GM12878 (cell line): ENCODE measurements at regions of chr1 and their contacts with region 1.

Region 1: GRCh38 chr1:181142096-181142958 is 53.8 kb downstream of the IER5 start:
- DNase-seq: no peak
- ATAC-seq: peak; percentile 92
- H3K4me3 ChIP-seq: no peak overlapping the region
- H3K27ac ChIP-seq: no peak overlapping the region
- H3K4me1 ChIP-seq: peaks cover 37% of the 10 kb centered on the region
- H3K27me3 ChIP-seq: no peaks in the 10 kb centered on the region
- CTCF ChIP-seq: peak; percentile 94 to 98 (median 98); a peak in 5 of 6 replicates
- EP300 ChIP-seq: no peak
- POLR2A ChIP-seq: no peak
- RAD21 ChIP-seq: peak; percentile 99

Region 2: GRCh38 chr1:180631766-180632325 is 510.5 kb before region 1 on chr1 and contains the start of gene XPR1:
- CTCF ChIA-PET with region 1: interaction called, 5 read pairs
- POLR2A ChIA-PET with region 1: no interaction called
- RAD21 ChIA-PET with region 1: interaction called, 4 read pairs
- SMC1A ChIA-PET with region 1: interaction called, 3 read pairs
- in situ Hi-C with region 1: no loop called
- intact Hi-C with region 1: loop called (anchors 10 kb)
- DNase-seq: peak; percentile 95
- ATAC-seq: peak; percentile 96
- H3K4me3 ChIP-seq: peak within 1 kb of the TSS; percentile 89
- H3K27ac ChIP-seq: peak within 1 kb of the TSS; percentile 56
- H3K4me1 ChIP-seq: peaks cover 8% of the 10 kb centered on the region
- H3K27me3 ChIP-seq: no peaks in the 10 kb centered on the region
- CTCF ChIP-seq: peak; percentile 9 to 16 (median 10); a peak in 1 of 6 replicates
- EP300 ChIP-seq: no peak
- POLR2A ChIP-seq: peak; percentile 88
- RAD21 ChIP-seq: peak; percentile 26; the same call in 1 of the 2 replicates
- polyA plus RNA-seq, gene XPR1: 1.1 to 1.5 TPM

Region 3: DNA sequence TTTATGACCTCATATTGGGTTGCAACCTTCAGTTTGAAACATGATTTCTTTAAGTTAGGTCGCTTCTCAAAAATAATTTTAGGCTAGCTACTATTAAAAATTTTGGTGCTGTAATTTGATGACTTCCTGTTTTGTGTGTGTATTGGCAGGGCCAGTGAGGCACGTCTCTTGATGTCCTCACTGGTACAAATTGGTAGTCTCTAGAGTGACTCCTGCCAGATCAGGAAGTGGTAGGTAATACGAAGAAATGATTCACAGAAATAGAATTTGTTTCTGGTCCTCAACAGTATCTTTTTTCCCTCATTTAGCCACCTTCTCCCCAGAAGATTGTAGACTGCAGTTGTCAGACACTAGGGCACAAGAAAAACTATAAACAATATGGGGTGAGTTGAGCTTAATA is 350.5 kb before region 1 on chr1:
- CTCF ChIA-PET with region 1: no interaction called
- POLR2A ChIA-PET with region 1: no interaction called
- RAD21 ChIA-PET with region 1: no interaction called
- SMC1A ChIA-PET with region 1: no interaction called
- in situ Hi-C with region 1: no loop called
- intact Hi-C with region 1: no loop called
- DNase-seq: no peak
- ATAC-seq: peak; percentile 70
- H3K4me3 ChIP-seq: no peak overlapping the region
- H3K27ac ChIP-seq: no peak overlapping the region
- H3K4me1 ChIP-seq: no peaks in the 10 kb centered on the region
- H3K27me3 ChIP-seq: no peaks in the 10 kb centered on the region
- CTCF ChIP-seq: no peak
- EP300 ChIP-seq: no peak
- POLR2A ChIP-seq: no peak
- RAD21 ChIP-seq: no peak

Region 4: GRCh38 chr1:180912801-180913565 is 229.3 kb before region 1 on chr1 and contains the start of gene KIAA1614:
- CTCF ChIA-PET with region 1: interaction called, 4 read pairs
- POLR2A ChIA-PET with region 1: interaction called, 3 read pairs
- RAD21 ChIA-PET with region 1: interaction called, 11 read pairs
- SMC1A ChIA-PET with region 1: interaction called, 15 read pairs
- in situ Hi-C with region 1: no loop called
- intact Hi-C with region 1: no loop called
- DNase-seq: no peak
- ATAC-seq: peak; percentile 45
- H3K4me3 ChIP-seq: peak within 1 kb of the TSS; percentile 61
- H3K27ac ChIP-seq: no peak within 1 kb of the TSS
- H3K4me1 ChIP-seq: peaks cover 22% of the 10 kb centered on the region
- H3K27me3 ChIP-seq: peaks cover 0 to 3% of the 10 kb centered on the region in 2 experiments; a peak in 1 of 4 replicates
- CTCF ChIP-seq: no peak
- EP300 ChIP-seq: no peak
- POLR2A ChIP-seq: no peak
- RAD21 ChIP-seq: no peak
- polyA plus RNA-seq, gene KIAA1614: 0.03 TPM in 1 of 2 experiments, not detected in the other

Region 5: GRCh38 chr1:181013144-181013543 is 129.2 kb before region 1 on chr1:
- CTCF ChIA-PET with region 1: interaction called, 13 read pairs
- POLR2A ChIA-PET with region 1: interaction called, 3 read pairs
- RAD21 ChIA-PET with region 1: interaction called, 12 read pairs
- SMC1A ChIA-PET with region 1: interaction called, 14 read pairs
- in situ Hi-C with region 1: no loop called
- intact Hi-C with region 1: no loop called
- DNase-seq: no peak
- ATAC-seq: no peak
- H3K4me3 ChIP-seq: no peak overlapping the region
- H3K27ac ChIP-seq: no peak overlapping the region
- H3K4me1 ChIP-seq: peaks cover 35% of the 10 kb centered on the region
- H3K27me3 ChIP-seq: no peaks in the 10 kb centered on the region
- CTCF ChIP-seq: no peak
- EP300 ChIP-seq: no peak
- POLR2A ChIP-seq: no peak
- RAD21 ChIP-seq: no peak

Region 6: DNA sequence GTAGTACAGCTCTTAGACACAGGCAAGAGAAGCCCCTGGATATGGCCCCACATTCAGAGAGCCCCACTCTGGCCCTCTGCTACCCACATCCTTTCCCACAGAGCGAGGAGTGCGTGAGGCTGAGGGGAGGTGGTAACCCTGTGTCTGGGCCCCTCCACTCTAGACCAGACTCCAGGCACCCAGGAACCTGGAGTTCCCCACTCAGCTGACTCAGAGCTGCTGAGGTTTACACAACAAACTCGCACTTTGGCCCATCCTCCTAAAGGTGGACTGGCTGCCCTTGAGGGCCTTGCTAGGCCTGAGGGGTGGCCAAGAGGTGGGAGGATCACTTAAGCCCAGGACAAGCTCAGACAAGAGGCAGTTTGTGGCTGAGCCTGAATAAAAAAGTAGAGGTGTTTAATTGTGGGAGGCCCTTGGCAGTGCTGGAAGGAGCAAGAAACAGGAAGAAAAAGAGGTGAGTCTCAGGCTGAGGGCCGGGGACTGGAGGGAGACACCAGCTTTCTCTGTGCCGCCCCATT is 97.8 kb before region 1 on chr1:
- CTCF ChIA-PET with region 1: interaction called, 321 read pairs
- POLR2A ChIA-PET with region 1: interaction called, 15 read pairs
- RAD21 ChIA-PET with region 1: interaction called, 189 read pairs
- SMC1A ChIA-PET with region 1: interaction called, 276 read pairs
- in situ Hi-C with region 1: loop called (anchors 5 kb)
- intact Hi-C with region 1: no loop called
- DNase-seq: peak; percentile 60
- ATAC-seq: peak; percentile 95
- H3K4me3 ChIP-seq: no peak overlapping the region; the same call in 1 of the 2 replicates
- H3K27ac ChIP-seq: peak overlapping the region; percentile 81
- H3K4me1 ChIP-seq: peaks cover 20% of the 10 kb centered on the region
- H3K27me3 ChIP-seq: no peaks in the 10 kb centered on the region
- CTCF ChIP-seq: no peak
- EP300 ChIP-seq: peak in 1 of 2 experiments; percentile 44; a peak in 1 of 4 replicates
- POLR2A ChIP-seq: peak; percentile 51; the same call in 1 of the 2 replicates
- RAD21 ChIP-seq: no peak

Region 7: GRCh38 chr1:181088079-181089016 is 54.0 kb before region 1 on chr1 and contains the start of gene IER5:
- CTCF ChIA-PET with region 1: interaction called, 1,067 read pairs
- POLR2A ChIA-PET with region 1: interaction called, 36 read pairs
- RAD21 ChIA-PET with region 1: interaction called, 966 read pairs
- SMC1A ChIA-PET with region 1: interaction called, 1,399 read pairs
- in situ Hi-C with region 1: no loop called
- intact Hi-C with region 1: loop called (anchors 1 kb)
- DNase-seq: peak; percentile 83
- ATAC-seq: peak; percentile 82
- H3K4me3 ChIP-seq: peak within 1 kb of the TSS; percentile 99
- H3K27ac ChIP-seq: peak within 1 kb of the TSS; percentile 97
- H3K4me1 ChIP-seq: peaks cover 13% of the 10 kb centered on the region; the same call in 1 of the 2 replicates
- H3K27me3 ChIP-seq: no peaks in the 10 kb centered on the region
- CTCF ChIP-seq: 0 out of 6 replicates have a peak, but pooled peaks of 1 of the 3 experiments have one; percentile 0
- EP300 ChIP-seq: 0 out of 4 replicates have a peak, but pooled peaks of 1 of the 2 experiments have one; percentile 15
- POLR2A ChIP-seq: peak; percentile 98
- RAD21 ChIP-seq: no peak
- polyA plus RNA-seq, gene IER5: 6.2 to 19.5 TPM

Region 8: DNA sequence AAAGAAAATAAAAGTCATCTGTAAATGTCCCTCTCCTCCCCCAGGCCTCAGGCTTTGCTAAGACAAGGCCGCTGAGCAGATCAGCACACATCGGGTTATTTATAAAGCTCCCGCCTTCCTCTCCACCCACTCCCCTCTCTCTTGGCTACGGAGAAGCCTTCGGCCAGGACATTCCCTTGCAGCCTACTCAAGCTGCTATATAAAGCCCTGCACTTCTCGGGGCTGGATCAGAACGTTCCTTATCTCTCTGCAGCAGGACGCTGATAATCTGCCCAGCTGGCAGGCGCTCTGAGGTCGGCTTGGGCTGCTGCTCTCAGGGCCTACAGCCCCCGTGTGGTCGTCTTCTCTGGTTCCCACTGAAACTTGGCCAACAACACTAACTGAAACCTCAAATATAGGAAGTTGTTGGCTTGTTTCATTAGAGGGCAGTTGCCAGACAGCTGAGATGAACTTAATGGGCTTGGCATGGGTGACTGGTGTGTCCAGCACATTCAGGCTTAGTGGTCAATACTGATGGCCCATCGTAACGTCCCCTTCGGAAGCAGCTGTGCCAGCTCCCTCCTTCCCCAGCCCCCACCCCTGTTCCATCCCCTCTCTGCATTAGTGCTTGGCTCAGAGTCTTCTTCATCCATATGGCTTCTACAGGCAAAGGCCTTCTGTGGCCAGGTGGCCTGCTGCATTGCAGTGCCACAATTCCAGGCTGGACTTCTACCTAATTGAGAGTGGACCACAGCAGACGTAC is 10.7 kb after region 1 on chr1:
- CTCF ChIA-PET with region 1: interaction called, 93 read pairs
- POLR2A ChIA-PET with region 1: interaction called, 33 read pairs
- RAD21 ChIA-PET with region 1: interaction called, 72 read pairs
- SMC1A ChIA-PET with region 1: interaction called, 114 read pairs
- in situ Hi-C with region 1: no loop called
- intact Hi-C with region 1: no loop called
- DNase-seq: no peak
- ATAC-seq: peak; percentile 88
- H3K4me3 ChIP-seq: no peak overlapping the region
- H3K27ac ChIP-seq: peak overlapping the region; percentile 62
- H3K4me1 ChIP-seq: peaks cover 48% of the 10 kb centered on the region
- H3K27me3 ChIP-seq: no peaks in the 10 kb centered on the region
- CTCF ChIP-seq: peak; percentile 19 to 40 (median 40); a peak in 4 of 6 replicates
- EP300 ChIP-seq: peak; percentile 57 to 68; a peak in 2 of 4 replicates
- POLR2A ChIP-seq: peak; percentile 61
- RAD21 ChIP-seq: peak; percentile 41; the same call in 1 of the 2 replicates